Activated CD4-positive, alpha-beta memory T cell treated with anti-CD3 and anti-CD28 coated beads for 36 hours (primary cell): ENCODE measurements at regions of chr1 and their contacts with region 1.

Region 1: GRCh38 chr1:41919764-41920397 is 1.2 kb upstream of the HIVEP3 start:
- DNase-seq: peak; percentile 94
- H3K4me3 Mint-ChIP-seq: peak overlapping the region; percentile 92
- H3K27ac Mint-ChIP-seq: peak overlapping the region; percentile 97
- H3K4me1 Mint-ChIP-seq: peaks cover 59% of the 10 kb centered on the region
- H3K27me3 Mint-ChIP-seq: no peaks in the 10 kb centered on the region

Region 2: GRCh38 chr1:41639332-41639936 is 280.4 kb before region 1 on chr1:
- CTCF ChIA-PET with region 1: no interaction called
- POLR2A ChIA-PET with region 1: no interaction called
- intact Hi-C with region 1: loop called (anchors 5 kb)
- DNase-seq: peak; percentile 87
- H3K4me3 Mint-ChIP-seq: peak overlapping the region; percentile 59
- H3K27ac Mint-ChIP-seq: no peak overlapping the region
- H3K4me1 Mint-ChIP-seq: peaks cover 12% of the 10 kb centered on the region
- H3K27me3 Mint-ChIP-seq: no peaks in the 10 kb centered on the region

Region 3: GRCh38 chr1:41862384-41863174 is 57.3 kb before region 1 on chr1:
- CTCF ChIA-PET with region 1: no interaction called
- POLR2A ChIA-PET with region 1: interaction called, 4 read pairs
- intact Hi-C with region 1: loop called (anchors 2 kb)
- DNase-seq: peak; percentile 83
- H3K4me3 Mint-ChIP-seq: peak overlapping the region; percentile 18
- H3K27ac Mint-ChIP-seq: peak overlapping the region; percentile 83
- H3K4me1 Mint-ChIP-seq: peaks cover 36% of the 10 kb centered on the region
- H3K27me3 Mint-ChIP-seq: no peaks in the 10 kb centered on the region

Region 4: DNA sequence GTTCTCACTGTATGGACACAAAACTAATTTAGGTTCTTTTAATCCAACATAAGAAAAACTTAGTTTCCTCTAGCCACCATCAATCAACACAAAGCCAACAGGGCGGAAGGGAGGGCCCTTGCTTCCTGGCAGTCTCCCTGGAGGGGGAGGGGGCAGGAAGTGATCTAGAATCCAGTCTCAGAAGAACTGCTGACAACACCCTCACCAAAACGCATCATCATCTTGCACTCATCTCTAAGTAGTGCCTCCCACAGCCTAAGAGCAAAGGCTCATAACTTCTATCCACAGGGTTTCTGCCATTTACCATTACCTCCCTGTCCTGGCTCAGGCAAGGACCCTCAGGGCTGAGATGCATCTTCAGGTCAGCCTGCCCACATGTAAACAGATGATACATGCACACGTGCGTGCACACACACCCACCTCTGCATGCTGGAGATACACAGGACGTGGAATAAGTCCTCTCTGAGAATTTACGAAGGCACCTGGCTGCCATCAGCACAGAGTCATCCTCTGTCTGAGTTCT is 21.6 kb before region 1 on chr1:
- CTCF ChIA-PET with region 1: no interaction called
- POLR2A ChIA-PET with region 1: no interaction called
- intact Hi-C with region 1: loop called (anchors 2 kb)
- DNase-seq: peak; percentile 91
- H3K4me3 Mint-ChIP-seq: peak overlapping the region; percentile 65
- H3K27ac Mint-ChIP-seq: peak overlapping the region; percentile 97
- H3K4me1 Mint-ChIP-seq: peaks cover 77% of the 10 kb centered on the region
- H3K27me3 Mint-ChIP-seq: no peaks in the 10 kb centered on the region

Region 5: GRCh38 chr1:41936118-41936517 is 16.2 kb after region 1 on chr1:
- CTCF ChIA-PET with region 1: interaction called, 4 read pairs
- POLR2A ChIA-PET with region 1: interaction called, 15 read pairs
- intact Hi-C with region 1: loop called (anchors 1 kb)
- DNase-seq: peak; percentile 56
- H3K4me3 Mint-ChIP-seq: no peak overlapping the region
- H3K27ac Mint-ChIP-seq: peak overlapping the region; percentile 55
- H3K4me1 Mint-ChIP-seq: peaks cover 39% of the 10 kb centered on the region
- H3K27me3 Mint-ChIP-seq: no peaks in the 10 kb centered on the region

Region 6: GRCh38 chr1:41954516-41954944 is 34.6 kb after region 1 on chr1:
- CTCF ChIA-PET with region 1: interaction called, 4 read pairs
- POLR2A ChIA-PET with region 1: interaction called, 3 read pairs
- intact Hi-C with region 1: loop called (anchors 5 kb)
- DNase-seq: no peak
- H3K4me3 Mint-ChIP-seq: no peak overlapping the region
- H3K27ac Mint-ChIP-seq: no peak overlapping the region
- H3K4me1 Mint-ChIP-seq: peaks cover 40% of the 10 kb centered on the region
- H3K27me3 Mint-ChIP-seq: no peaks in the 10 kb centered on the region

Region 7: GRCh38 chr1:42035830-42036604 is 116.1 kb after region 1 on chr1:
- CTCF ChIA-PET with region 1: no interaction called
- POLR2A ChIA-PET with region 1: no interaction called
- intact Hi-C with region 1: loop called (anchors 5 kb)
- DNase-seq: peak; percentile 99
- H3K4me3 Mint-ChIP-seq: peak overlapping the region; percentile 81
- H3K27ac Mint-ChIP-seq: peak overlapping the region; percentile 46
- H3K4me1 Mint-ChIP-seq: peaks cover 38% of the 10 kb centered on the region
- H3K27me3 Mint-ChIP-seq: no peaks in the 10 kb centered on the region